Heart left ventricle (tissue), 16 donors: ENCODE measurements at regions of chr12 and their contacts with region 1.

Region 1: GRCh38 chr12:42504049-42504448 is 85.5 kb downstream of the PRICKLE1 start:
- DNase-seq: peak in 1 of 5 donors; percentile 23
- ATAC-seq: peak in 1 of 4 donors; percentile 30
- H3K4me3 ChIP-seq: no peak overlapping the region
- H3K27ac ChIP-seq: no peak overlapping the region
- H3K4me1 ChIP-seq: peaks cover 0 to 25% (median 4%) of the 10 kb centered on the region in 12 donors
- H3K27me3 ChIP-seq: no peaks in the 10 kb centered on the region
- CTCF ChIP-seq: no peak
- POLR2A ChIP-seq: no peak

Region 2: GRCh38 chr12:42360747-42361403 is 143.2 kb before region 1 on chr12:
- intact Hi-C with region 1: no loop called
- DNase-seq: no peak
- ATAC-seq: no peak
- H3K4me3 ChIP-seq: no peak overlapping the region
- H3K27ac ChIP-seq: no peak overlapping the region
- H3K4me1 ChIP-seq: peaks cover 0 to 17% (median 3%) of the 10 kb centered on the region in 12 donors
- H3K27me3 ChIP-seq: no peaks in the 10 kb centered on the region
- CTCF ChIP-seq: no peak
- POLR2A ChIP-seq: no peak

Region 3: GRCh38 chr12:42546709-42547108 is 42.7 kb after region 1 on chr12:
- intact Hi-C with region 1: loop called in 3 of 10 experiments (anchors 5 to 10 kb)
- DNase-seq: no peak
- ATAC-seq: no peak
- H3K4me3 ChIP-seq: no peak overlapping the region
- H3K27ac ChIP-seq: no peak overlapping the region
- H3K4me1 ChIP-seq: peaks cover 0 to 4% (median 0%) of the 10 kb centered on the region in 12 donors
- H3K27me3 ChIP-seq: no peaks in the 10 kb centered on the region
- CTCF ChIP-seq: no peak
- POLR2A ChIP-seq: no peak

Region 4: DNA sequence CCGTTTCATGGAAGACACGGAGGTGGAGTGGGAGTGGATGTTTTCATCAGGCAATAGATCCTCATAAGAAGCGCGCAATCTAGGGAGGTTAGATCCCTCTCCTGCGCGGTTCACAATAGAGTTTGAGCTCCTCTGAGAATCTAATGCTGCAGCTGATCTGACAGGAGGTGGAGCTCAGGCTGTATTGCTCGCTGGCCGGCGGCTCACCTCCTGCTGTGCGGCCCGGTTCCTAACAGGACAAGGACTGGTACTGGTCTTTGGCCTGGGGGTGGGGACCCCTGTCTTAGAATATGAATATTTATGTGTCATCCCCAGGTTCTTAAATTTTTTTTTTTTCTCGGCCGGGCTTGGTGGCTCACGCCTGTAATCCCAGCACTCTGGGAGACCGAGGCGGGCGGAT is 48.8 kb after region 1 on chr12:
- intact Hi-C with region 1: loop called in 3 of 10 experiments (anchors 5 to 10 kb)
- DNase-seq: no peak
- ATAC-seq: no peak
- H3K4me3 ChIP-seq: no peak overlapping the region
- H3K27ac ChIP-seq: no peak overlapping the region
- H3K4me1 ChIP-seq: peaks cover 0 to 20% (median 1%) of the 10 kb centered on the region in 12 donors
- H3K27me3 ChIP-seq: no peaks in the 10 kb centered on the region
- CTCF ChIP-seq: no peak
- POLR2A ChIP-seq: no peak